Dendritic cell treated with granulocyte-macrophage colony-stimulating factor and Interleukin-4, amounts not matched to agents 40 ng/mL and 50 ng/mL, for 4 days (primary cell): ENCODE measurements at regions of chr22 and their contacts with region 1.

Region 1: DNA sequence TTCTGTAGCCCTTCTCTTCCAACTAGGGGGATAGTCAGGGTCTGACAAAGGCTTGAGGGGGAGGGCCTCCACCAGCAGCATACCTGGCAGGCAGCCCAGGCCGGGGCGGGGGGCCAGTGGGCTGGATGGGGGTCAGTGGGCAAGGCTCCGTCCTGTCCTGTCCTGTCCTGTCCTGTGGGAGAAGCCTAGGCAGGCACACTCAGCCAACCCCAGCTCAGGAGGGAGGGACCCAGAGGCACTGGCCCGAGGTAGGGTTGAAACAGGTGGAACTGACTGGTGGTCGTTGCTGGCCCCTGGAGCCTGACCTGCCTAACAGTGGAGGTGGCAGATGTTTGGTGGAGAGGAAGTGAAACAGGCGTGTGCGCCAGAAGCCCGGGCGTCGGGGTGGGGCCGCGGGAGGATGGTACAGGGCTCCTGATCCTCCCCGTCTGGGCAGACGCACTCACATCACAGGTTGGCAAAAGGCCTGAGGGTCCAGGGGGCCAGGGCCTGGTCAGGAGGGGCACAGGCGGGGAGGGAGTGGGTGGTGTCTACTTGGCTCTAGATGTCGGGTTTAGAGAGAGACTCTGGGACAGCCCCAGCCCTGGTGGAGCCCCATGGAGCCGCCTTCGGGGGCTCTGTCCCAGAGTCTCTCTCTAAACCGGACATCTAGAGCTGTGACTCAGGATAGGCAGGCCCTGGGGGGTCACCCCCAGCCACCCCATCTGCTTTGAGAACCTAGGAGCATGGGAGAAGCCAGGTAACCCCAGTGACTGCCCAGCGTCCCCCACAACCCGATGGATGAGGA is 32.5 kb upstream of the GRAMD4 start:
- H3K4me3 Mint-ChIP-seq: peak overlapping the region; percentile 72
- H3K27ac Mint-ChIP-seq: peak overlapping the region; percentile 90
- H3K4me1 Mint-ChIP-seq: peaks cover 97% of the 10 kb centered on the region
- H3K27me3 Mint-ChIP-seq: no peaks in the 10 kb centered on the region

Region 2: GRCh38 chr22:46514592-46515207 is 73.0 kb before region 1 on chr22:
- intact Hi-C with region 1: no loop called
- H3K4me3 Mint-ChIP-seq: no peak overlapping the region
- H3K27ac Mint-ChIP-seq: no peak overlapping the region
- H3K4me1 Mint-ChIP-seq: no peaks in the 10 kb centered on the region
- H3K27me3 Mint-ChIP-seq: peaks cover 12% of the 10 kb centered on the region

Region 3: GRCh38 chr22:46619830-46620501 is 32.3 kb after region 1 on chr22 and contains the start of gene GRAMD4:
- intact Hi-C with region 1: loop called (anchors 5 kb)
- H3K4me3 Mint-ChIP-seq: peak within 1 kb of the TSS; percentile 65
- H3K27ac Mint-ChIP-seq: peak within 1 kb of the TSS; percentile 73
- H3K4me1 Mint-ChIP-seq: peaks cover 83% of the 10 kb centered on the region
- H3K27me3 Mint-ChIP-seq: no peaks in the 10 kb centered on the region

Region 4: GRCh38 chr22:46737976-46738646 is 150.4 kb after region 1 on chr22 and contains the start of gene CERK:
- intact Hi-C with region 1: loop called (anchors 10 kb)
- H3K4me3 Mint-ChIP-seq: peak within 1 kb of the TSS; percentile 97
- H3K27ac Mint-ChIP-seq: peak within 1 kb of the TSS; percentile 92
- H3K4me1 Mint-ChIP-seq: peaks cover 70% of the 10 kb centered on the region
- H3K27me3 Mint-ChIP-seq: no peaks in the 10 kb centered on the region